ENCODE measurements at regions of chr5 and their contacts with region 1.

Region 1: DNA sequence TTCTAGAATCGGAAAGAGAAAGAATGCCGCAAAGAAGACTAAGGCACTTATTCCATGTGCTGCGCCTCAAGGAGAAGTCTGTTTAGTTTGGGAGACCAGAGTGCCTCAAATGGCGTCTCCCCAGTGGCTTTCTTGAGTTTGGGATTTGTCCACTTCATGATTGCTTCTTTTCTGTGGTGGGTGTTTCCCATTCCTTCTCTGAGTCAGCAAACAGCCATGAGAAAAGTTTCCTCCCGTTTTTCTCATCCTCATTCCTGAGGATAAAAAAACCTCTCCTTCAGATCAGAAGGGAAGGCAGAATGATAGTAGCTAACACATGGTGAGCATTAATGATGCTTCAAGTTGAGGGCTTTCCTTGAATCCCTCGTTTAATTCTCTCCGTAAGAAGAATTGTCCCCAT is 275.9 kb upstream of the WWC1 start:
- DNase-seq: no peak
- H3K4me3 ChIP-seq: no peak overlapping the region
- H3K27ac ChIP-seq: no peak overlapping the region
- H3K4me1 ChIP-seq: no peaks in the 10 kb centered on the region
- H3K27me3 ChIP-seq: no peaks in the 10 kb centered on the region
- CTCF ChIP-seq: no peak
- POLR2A ChIP-seq: no peak

Region 2: GRCh38 chr5:167750586-167750985 is 264.9 kb before region 1 on chr5:
- intact Hi-C with region 1: no loop called
- DNase-seq: no peak
- H3K4me3 ChIP-seq: no peak overlapping the region
- H3K27ac ChIP-seq: no peak overlapping the region
- H3K4me1 ChIP-seq: no peaks in the 10 kb centered on the region
- H3K27me3 ChIP-seq: no peaks in the 10 kb centered on the region
- CTCF ChIP-seq: no peak
- POLR2A ChIP-seq: no peak

Region 3: GRCh38 chr5:167952278-167952995 is 63.1 kb before region 1 on chr5:
- intact Hi-C with region 1: loop called (anchors 2 kb)
- DNase-seq: no peak
- H3K4me3 ChIP-seq: no peak overlapping the region
- H3K27ac ChIP-seq: no peak overlapping the region
- H3K4me1 ChIP-seq: peaks cover 16% of the 10 kb centered on the region
- H3K27me3 ChIP-seq: no peaks in the 10 kb centered on the region
- CTCF ChIP-seq: no peak
- POLR2A ChIP-seq: no peak

Measured in vagina (tissue), 2 donors.